Activated naive CD4-positive, alpha-beta T cell treated with anti-CD3 and anti-CD28 coated beads for 36 hours (primary cell): ENCODE measurements at regions of chr17 and their contacts with region 1.

Region 1: DNA sequence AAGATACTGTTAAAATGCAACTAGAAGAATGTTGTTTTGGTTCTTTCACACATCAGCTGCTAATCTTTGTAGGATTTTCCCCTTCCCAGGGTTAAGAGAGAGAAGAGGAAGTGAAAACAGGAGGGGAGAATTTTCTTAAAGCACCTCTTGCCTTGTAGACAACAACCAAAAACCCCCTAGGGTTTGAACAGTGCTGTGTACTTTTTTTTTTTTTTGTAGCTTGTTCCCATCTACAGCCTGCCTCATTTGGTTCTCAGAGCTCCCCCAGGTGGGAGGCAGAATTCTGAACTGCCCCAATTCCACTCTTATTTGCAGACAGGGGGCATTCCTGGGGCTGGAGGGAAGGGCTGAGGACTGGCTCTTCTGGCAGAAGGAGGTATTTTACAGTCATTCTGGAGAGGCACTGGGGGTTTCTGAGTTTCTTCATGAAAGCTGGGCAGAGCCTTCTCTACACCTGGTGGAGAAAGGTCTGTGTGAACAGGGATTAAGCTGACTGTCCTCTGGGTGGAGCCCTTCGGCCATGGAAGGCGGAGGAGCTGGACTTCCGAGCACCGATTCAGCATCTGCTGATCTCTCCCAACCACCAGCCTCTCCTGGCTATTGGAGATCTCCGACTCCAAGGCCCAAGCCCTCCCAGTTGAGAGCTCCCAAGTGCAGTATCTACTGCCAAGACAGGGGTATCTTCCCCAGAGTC is 32.2 kb downstream of the SMARCE1 start:
- DNase-seq: peak; percentile 84
- H3K4me3 Mint-ChIP-seq: peak overlapping the region; percentile 13
- H3K27ac Mint-ChIP-seq: peak overlapping the region; percentile 89
- H3K4me1 Mint-ChIP-seq: peaks cover 76% of the 10 kb centered on the region
- H3K27me3 Mint-ChIP-seq: no peaks in the 10 kb centered on the region

Region 2: GRCh38 chr17:40371261-40371929 is 244.0 kb before region 1 on chr17:
- CTCF ChIA-PET with region 1: interaction called, 3 read pairs
- intact Hi-C with region 1: loop called (anchors 5 kb)
- DNase-seq: peak; percentile 44
- H3K4me3 Mint-ChIP-seq: no peak overlapping the region
- H3K27ac Mint-ChIP-seq: no peak overlapping the region
- H3K4me1 Mint-ChIP-seq: peaks cover 32% of the 10 kb centered on the region
- H3K27me3 Mint-ChIP-seq: no peaks in the 10 kb centered on the region

Region 3: GRCh38 chr17:40531051-40531991 is 84.1 kb before region 1 on chr17:
- CTCF ChIA-PET with region 1: interaction called, 18 read pairs
- intact Hi-C with region 1: loop called (anchors 1 kb)
- DNase-seq: peak; percentile 95
- H3K4me3 Mint-ChIP-seq: peak overlapping the region; percentile 61
- H3K27ac Mint-ChIP-seq: peak overlapping the region; percentile 91
- H3K4me1 Mint-ChIP-seq: peaks cover 72% of the 10 kb centered on the region
- H3K27me3 Mint-ChIP-seq: no peaks in the 10 kb centered on the region

Region 4: GRCh38 chr17:40551879-40552768 is 63.3 kb before region 1 on chr17:
- CTCF ChIA-PET with region 1: interaction called, 205 read pairs
- intact Hi-C with region 1: no loop called
- DNase-seq: peak; percentile 32
- H3K4me3 Mint-ChIP-seq: peak overlapping the region; percentile 35
- H3K27ac Mint-ChIP-seq: peak overlapping the region; percentile 89
- H3K4me1 Mint-ChIP-seq: peaks cover 100% of the 10 kb centered on the region
- H3K27me3 Mint-ChIP-seq: no peaks in the 10 kb centered on the region

Region 5: DNA sequence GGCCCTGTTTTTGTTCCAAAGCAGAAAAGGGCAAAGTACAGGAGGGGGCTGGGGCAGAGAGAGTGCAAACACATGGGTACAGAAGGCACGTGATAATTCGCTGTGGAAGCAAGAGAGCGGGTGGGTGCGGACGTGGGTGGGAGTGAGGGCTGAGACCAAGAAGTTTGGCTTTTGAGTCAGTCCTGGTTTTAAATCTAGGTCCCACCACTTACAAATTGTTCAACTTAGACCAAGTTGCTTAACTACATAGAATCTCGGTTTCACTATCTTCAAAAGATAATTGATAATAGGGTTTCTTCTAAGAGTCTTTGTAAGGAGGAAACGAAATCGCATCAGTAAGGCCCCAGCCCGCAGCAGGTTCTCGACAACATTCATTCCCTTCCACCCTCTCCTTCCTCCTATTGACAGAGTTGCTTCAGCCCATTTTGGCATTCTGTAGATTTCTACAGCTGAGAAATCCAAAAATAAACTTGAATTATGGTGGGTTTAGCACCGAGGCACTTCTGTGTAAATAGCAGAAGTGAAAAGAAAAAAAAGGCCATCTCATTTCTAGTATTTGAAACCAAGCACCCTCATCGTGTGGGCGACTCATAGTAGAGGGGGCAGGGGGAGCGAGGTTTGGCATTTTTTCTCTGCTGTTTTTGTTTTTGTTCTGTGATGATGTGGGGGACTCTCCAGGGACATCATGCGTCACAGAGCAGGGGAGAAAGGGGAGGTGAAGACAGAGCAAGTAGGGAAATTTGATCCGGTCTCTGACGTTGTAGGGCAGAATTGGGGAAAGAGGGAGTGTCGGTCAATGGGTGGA is 16.6 kb before region 1 on chr17:
- CTCF ChIA-PET with region 1: interaction called, 45 read pairs
- intact Hi-C with region 1: loop called (anchors 1 kb)
- DNase-seq: peak; percentile 90
- H3K4me3 Mint-ChIP-seq: peak overlapping the region; percentile 67
- H3K27ac Mint-ChIP-seq: peak overlapping the region; percentile 98
- H3K4me1 Mint-ChIP-seq: peaks cover 95% of the 10 kb centered on the region
- H3K27me3 Mint-ChIP-seq: no peaks in the 10 kb centered on the region

Region 6: GRCh38 chr17:40707720-40708119 is 92.3 kb after region 1 on chr17:
- CTCF ChIA-PET with region 1: no interaction called
- intact Hi-C with region 1: no loop called
- DNase-seq: no peak
- H3K4me3 Mint-ChIP-seq: no peak overlapping the region
- H3K27ac Mint-ChIP-seq: no peak overlapping the region
- H3K4me1 Mint-ChIP-seq: no peaks in the 10 kb centered on the region
- H3K27me3 Mint-ChIP-seq: peaks cover 10% of the 10 kb centered on the region

Region 7: GRCh38 chr17:40803617-40804082 is 188.2 kb after region 1 on chr17:
- CTCF ChIA-PET with region 1: no interaction called
- intact Hi-C with region 1: loop called (anchors 1 kb)
- DNase-seq: peak; percentile 90
- H3K4me3 Mint-ChIP-seq: no peak overlapping the region
- H3K27ac Mint-ChIP-seq: no peak overlapping the region
- H3K4me1 Mint-ChIP-seq: no peaks in the 10 kb centered on the region
- H3K27me3 Mint-ChIP-seq: peaks cover 23% of the 10 kb centered on the region